Spleen (tissue), 13 donors: ENCODE measurements at regions of chr1 and their contacts with region 1.

Region 1: GRCh38 chr1:201941420-201942128 is 4.8 kb downstream of the LMOD1 start:
- DNase-seq: no peak
- H3K4me3 ChIP-seq: peak overlapping the region in 2 of 8 donors; percentile 5 to 35
- H3K27ac ChIP-seq: peak overlapping the region in 3 of 8 donors; percentile 0 to 17 (median 13)
- H3K4me1 ChIP-seq: peaks cover 0 to 13% (median 4%) of the 10 kb centered on the region in 6 donors
- H3K27me3 ChIP-seq: peaks cover 0 to 42% (median 16%) of the 10 kb centered on the region in 7 donors
- CTCF ChIP-seq: no peak
- POLR2A ChIP-seq: no peak

Region 2: DNA sequence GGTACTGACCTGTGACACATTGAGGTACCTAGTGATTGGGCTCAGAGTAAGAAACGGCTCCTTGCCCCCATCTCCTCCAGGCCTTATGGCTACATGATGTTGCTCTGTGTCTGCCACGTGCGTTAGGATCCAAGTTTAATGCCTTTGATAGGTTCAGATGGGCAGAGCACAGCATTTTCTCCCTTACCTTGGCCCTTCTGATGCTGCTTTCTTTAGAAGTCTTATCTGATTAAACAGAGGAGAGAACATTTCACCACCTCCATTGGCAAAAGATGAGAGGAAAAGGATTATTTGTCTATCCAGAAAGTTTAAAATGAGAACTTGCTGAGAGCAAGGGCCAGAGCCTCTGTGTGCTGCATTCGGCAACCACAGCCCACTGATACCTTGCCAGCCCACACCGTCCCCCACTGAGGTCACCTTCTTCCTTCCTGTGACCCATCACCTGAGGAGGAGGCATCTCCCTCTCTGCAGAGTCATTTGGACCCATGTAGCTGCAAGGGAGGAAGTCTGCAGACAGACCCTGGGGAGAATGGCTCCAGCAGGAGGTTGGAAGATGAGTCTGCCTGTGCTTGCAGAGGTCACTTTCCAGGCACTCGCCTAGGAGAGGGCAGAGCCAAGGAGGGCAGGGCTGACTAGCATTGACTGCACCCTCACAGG is 36.2 kb before region 1 on chr1:
- intact Hi-C with region 1: loop called (anchors 5 kb)
- DNase-seq: no peak
- H3K4me3 ChIP-seq: no peak overlapping the region
- H3K27ac ChIP-seq: peak overlapping the region in 7 of 8 donors; percentile 12 to 72 (median 59)
- H3K4me1 ChIP-seq: peaks cover 0 to 10% (median 2%) of the 10 kb centered on the region in 6 donors
- H3K27me3 ChIP-seq: no peaks in the 10 kb centered on the region
- CTCF ChIP-seq: no peak
- POLR2A ChIP-seq: no peak